Keratinocyte (primary cell): ENCODE measurements at regions of chr7 and their contacts with region 1.

Region 1: GRCh38 chr7:31122649-31123058 is 70.5 kb downstream of the ADCYAP1R1 start:
- DNase-seq: peak; percentile 46
- H3K4me3 ChIP-seq: no peak overlapping the region
- H3K27ac ChIP-seq: no peak overlapping the region
- H3K4me1 ChIP-seq: no peaks in the 10 kb centered on the region
- H3K27me3 ChIP-seq: no peaks in the 10 kb centered on the region
- CTCF ChIP-seq: peak; percentile 75 to 83 (median 83)

Region 2: GRCh38 chr7:30800785-30801252 is 321.8 kb before region 1 on chr7:
- dilution Hi-C with region 1: loop called (anchors 25 kb)
- DNase-seq: no peak
- H3K4me3 ChIP-seq: no peak overlapping the region
- H3K27ac ChIP-seq: no peak overlapping the region
- H3K4me1 ChIP-seq: peaks cover 67% of the 10 kb centered on the region
- H3K27me3 ChIP-seq: no peaks in the 10 kb centered on the region
- CTCF ChIP-seq: peak; percentile 52 to 83 (median 79)

Region 3: GRCh38 chr7:30983042-30983913 is 139.4 kb before region 1 on chr7:
- dilution Hi-C with region 1: loop called (anchors 25 kb)
- DNase-seq: no peak
- H3K4me3 ChIP-seq: no peak overlapping the region
- H3K27ac ChIP-seq: no peak overlapping the region
- H3K4me1 ChIP-seq: peaks cover 11% of the 10 kb centered on the region
- H3K27me3 ChIP-seq: peaks cover 15% of the 10 kb centered on the region
- CTCF ChIP-seq: peak; percentile 90 to 99 (median 96)

Region 4: GRCh38 chr7:31160941-31161340 is 38.3 kb after region 1 on chr7:
- dilution Hi-C with region 1: no loop called
- DNase-seq: no peak
- H3K4me3 ChIP-seq: no peak overlapping the region
- H3K27ac ChIP-seq: no peak overlapping the region
- H3K4me1 ChIP-seq: no peaks in the 10 kb centered on the region
- H3K27me3 ChIP-seq: no peaks in the 10 kb centered on the region
- CTCF ChIP-seq: no peak